AG04450 (cell line): ENCODE measurements at regions of chr9 and their contacts with region 1.

Region 1: GRCh38 chr9:95127249-95128176 is 190.0 kb downstream of the FANCC start:
- DNase-seq: peak; percentile 46
- H3K4me3 ChIP-seq: peak overlapping the region; percentile 50
- H3K27ac ChIP-seq: no peak overlapping the region
- H3K27me3 ChIP-seq: no peaks in the 10 kb centered on the region
- CTCF ChIP-seq: peak; percentile 98

Region 2: GRCh38 chr9:94672811-94673487 is 454.6 kb before region 1 on chr9:
- CTCF ChIA-PET with region 1: interaction called, 168 read pairs
- POLR2A ChIA-PET with region 1: no interaction called
- DNase-seq: no peak
- H3K4me3 ChIP-seq: no peak overlapping the region
- H3K27ac ChIP-seq: no peak overlapping the region
- H3K27me3 ChIP-seq: no peaks in the 10 kb centered on the region
- CTCF ChIP-seq: no peak

Region 3: DNA sequence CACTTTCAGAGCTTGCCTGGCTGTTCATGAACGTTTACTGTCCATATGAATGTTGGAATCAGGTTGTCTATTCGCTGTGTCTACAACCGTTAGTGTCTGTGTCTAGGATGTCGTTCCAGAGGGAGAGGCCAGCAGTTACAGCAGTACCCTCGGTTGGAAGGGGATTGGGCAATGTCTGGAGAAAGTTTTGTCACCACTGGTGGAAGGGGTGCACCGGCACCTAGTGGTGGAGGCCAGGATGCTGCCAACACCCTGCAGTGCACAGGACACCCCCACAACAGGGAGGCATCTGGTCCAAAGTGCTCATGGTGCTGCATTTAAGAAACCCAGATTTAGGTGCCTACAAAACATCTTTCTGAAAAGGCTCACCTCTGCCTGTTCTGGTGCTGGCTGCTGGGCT is 30.7 kb before region 1 on chr9:
- CTCF ChIA-PET with region 1: interaction called, 10 read pairs
- POLR2A ChIA-PET with region 1: no interaction called
- DNase-seq: no peak
- H3K4me3 ChIP-seq: no peak overlapping the region
- H3K27ac ChIP-seq: no peak overlapping the region
- H3K27me3 ChIP-seq: no peaks in the 10 kb centered on the region
- CTCF ChIP-seq: 0 out of 2 replicates have a peak, but pooled peaks have one; percentile 4

Region 4: GRCh38 chr9:95116003-95116807 is 11.3 kb before region 1 on chr9:
- CTCF ChIA-PET with region 1: interaction called, 56 read pairs
- POLR2A ChIA-PET with region 1: no interaction called
- DNase-seq: no peak
- H3K4me3 ChIP-seq: no peak overlapping the region
- H3K27ac ChIP-seq: no peak overlapping the region
- H3K27me3 ChIP-seq: no peaks in the 10 kb centered on the region
- CTCF ChIP-seq: peak; percentile 23; the same call in 1 of the 2 replicates

Region 5: GRCh38 chr9:95150903-95151302 is 23.4 kb after region 1 on chr9:
- CTCF ChIA-PET with region 1: interaction called, 32 read pairs
- POLR2A ChIA-PET with region 1: no interaction called
- DNase-seq: no peak
- H3K4me3 ChIP-seq: no peak overlapping the region
- H3K27ac ChIP-seq: no peak overlapping the region
- H3K27me3 ChIP-seq: no peaks in the 10 kb centered on the region
- CTCF ChIP-seq: no peak